ENCODE measurements at regions of chr6 and their contacts with region 1.

Region 1: GRCh38 chr6:56292505-56293181 is 45.3 kb upstream of the COL21A1 start:
- DNase-seq: peak; percentile 83
- H3K4me3 ChIP-seq: no peak overlapping the region
- H3K27ac ChIP-seq: no peak overlapping the region
- H3K4me1 ChIP-seq: peaks cover 24% of the 10 kb centered on the region
- H3K27me3 ChIP-seq: no peaks in the 10 kb centered on the region
- CTCF ChIP-seq: peak; percentile 82

Region 2: DNA sequence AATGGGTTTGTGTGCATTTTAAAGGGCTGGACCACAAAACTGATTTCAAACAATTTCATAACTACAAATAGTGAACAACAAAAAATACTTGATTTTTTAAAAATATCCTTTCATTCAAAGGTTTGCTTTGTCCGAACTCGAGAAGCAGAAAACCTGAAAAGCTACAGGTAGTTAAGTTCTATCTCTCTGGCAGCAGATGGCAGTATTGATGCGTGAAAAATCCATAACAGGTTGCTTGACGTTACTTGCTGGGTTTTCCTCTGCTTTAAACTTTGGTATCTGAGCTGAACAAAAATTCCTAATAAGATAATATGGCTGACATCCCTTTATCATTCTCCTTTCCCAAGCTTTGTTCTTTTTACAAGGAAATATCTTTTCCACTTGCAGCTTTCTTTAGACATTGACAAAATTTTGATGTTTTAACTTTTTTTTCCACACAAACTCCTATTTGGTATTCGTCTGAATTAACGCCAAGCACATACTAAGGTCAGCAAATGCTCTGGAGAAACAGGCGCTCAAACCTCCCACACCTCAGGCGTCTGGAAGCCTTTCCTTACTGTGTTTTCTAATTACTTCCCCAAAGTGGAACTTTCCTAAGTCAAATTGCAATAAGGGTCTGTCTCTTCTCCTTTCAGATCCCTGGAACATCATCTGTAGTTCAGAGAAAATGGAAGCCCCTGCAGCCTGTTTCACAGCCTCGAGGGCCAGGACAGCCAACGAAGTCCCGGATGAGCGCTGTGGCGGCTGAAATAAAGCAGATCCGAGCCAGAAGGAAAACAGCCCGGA is 1015.7 kb before region 1 on chr6:
- CTCF ChIA-PET with region 1: interaction called, 11 read pairs
- POLR2A ChIA-PET with region 1: no interaction called
- intact Hi-C with region 1: loop called (anchors 2 kb)
- DNase-seq: peak; percentile 73
- H3K4me3 ChIP-seq: no peak overlapping the region
- H3K27ac ChIP-seq: no peak overlapping the region
- H3K4me1 ChIP-seq: peaks cover 6% of the 10 kb centered on the region
- H3K27me3 ChIP-seq: no peaks in the 10 kb centered on the region
- CTCF ChIP-seq: peak; percentile 78

Region 3: GRCh38 chr6:55293116-55293515 is 999.5 kb before region 1 on chr6:
- CTCF ChIA-PET with region 1: no interaction called
- POLR2A ChIA-PET with region 1: no interaction called
- intact Hi-C with region 1: loop called (anchors 5 kb)
- DNase-seq: peak; percentile 34
- H3K4me3 ChIP-seq: no peak overlapping the region
- H3K27ac ChIP-seq: no peak overlapping the region
- H3K4me1 ChIP-seq: no peaks in the 10 kb centered on the region
- H3K27me3 ChIP-seq: no peaks in the 10 kb centered on the region
- CTCF ChIP-seq: peak; percentile 61

Region 4: DNA sequence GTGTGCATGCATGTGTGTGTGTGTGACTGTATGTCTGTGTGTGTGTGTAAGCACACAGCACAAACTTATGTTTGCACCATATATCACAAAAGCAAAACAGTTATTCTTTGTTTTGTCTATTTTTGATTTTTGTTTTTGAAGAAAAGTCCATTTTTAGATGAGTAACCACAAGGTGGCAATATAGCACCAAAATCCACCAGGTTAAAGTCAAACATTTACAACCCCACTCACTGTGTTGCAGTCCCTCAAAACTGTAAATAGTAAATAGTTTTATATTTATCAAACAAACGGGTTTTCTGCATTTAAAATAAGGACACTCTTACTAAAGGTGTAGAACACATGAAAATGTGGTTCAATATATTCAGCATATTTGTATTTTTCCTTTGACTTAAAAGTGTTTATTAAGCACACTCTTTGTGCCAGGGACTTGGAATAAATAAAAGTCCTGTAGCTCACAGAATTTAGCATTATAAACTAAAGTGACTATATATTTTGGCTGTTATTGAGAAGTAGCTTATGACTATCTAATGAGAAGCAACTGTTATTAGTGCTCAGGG is 846.9 kb before region 1 on chr6:
- CTCF ChIA-PET with region 1: interaction called, 4 read pairs
- POLR2A ChIA-PET with region 1: no interaction called
- intact Hi-C with region 1: loop called (anchors 2 kb)
- DNase-seq: peak; percentile 56
- H3K4me3 ChIP-seq: no peak overlapping the region
- H3K27ac ChIP-seq: no peak overlapping the region
- H3K4me1 ChIP-seq: no peaks in the 10 kb centered on the region
- H3K27me3 ChIP-seq: no peaks in the 10 kb centered on the region
- CTCF ChIP-seq: peak; percentile 71

Region 5: GRCh38 chr6:55886185-55886836 is 406.3 kb before region 1 on chr6:
- CTCF ChIA-PET with region 1: no interaction called
- POLR2A ChIA-PET with region 1: no interaction called
- intact Hi-C with region 1: loop called (anchors 10 kb)
- DNase-seq: peak; percentile 39
- H3K4me3 ChIP-seq: no peak overlapping the region
- H3K27ac ChIP-seq: no peak overlapping the region
- H3K4me1 ChIP-seq: peaks cover 14% of the 10 kb centered on the region
- H3K27me3 ChIP-seq: no peaks in the 10 kb centered on the region
- CTCF ChIP-seq: peak; percentile 66

Region 6: DNA sequence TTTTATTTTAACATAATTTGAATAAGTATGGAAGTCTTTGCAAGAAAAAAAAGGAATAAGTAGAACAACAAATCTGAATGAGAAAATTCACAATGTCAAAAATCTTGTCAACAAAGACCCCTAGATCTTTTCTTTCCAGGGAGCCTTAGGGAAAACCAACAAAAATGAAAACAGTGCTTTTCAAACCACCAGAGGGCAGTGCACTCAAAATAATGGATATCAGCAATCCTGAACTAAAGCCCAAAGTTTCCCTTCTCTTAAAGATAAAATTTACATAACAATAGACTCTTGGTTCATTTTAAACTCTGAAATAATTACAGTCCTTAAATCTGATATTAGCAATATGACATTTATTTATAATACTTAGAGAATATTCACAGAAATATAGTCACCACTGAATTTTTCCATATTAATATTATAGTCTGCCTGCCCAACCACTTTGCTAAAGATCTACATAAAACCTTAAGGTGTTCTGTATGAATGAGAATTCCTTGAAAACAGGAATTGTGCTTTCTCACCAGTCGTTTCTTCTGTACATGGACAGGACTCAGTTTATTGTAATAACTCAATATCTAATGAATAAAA is 311.9 kb before region 1 on chr6:
- CTCF ChIA-PET with region 1: interaction called, 7 read pairs
- POLR2A ChIA-PET with region 1: no interaction called
- intact Hi-C with region 1: loop called (anchors 1 kb)
- DNase-seq: peak; percentile 82
- H3K4me3 ChIP-seq: no peak overlapping the region
- H3K27ac ChIP-seq: peak overlapping the region; percentile 48
- H3K4me1 ChIP-seq: peaks cover 25% of the 10 kb centered on the region
- H3K27me3 ChIP-seq: no peaks in the 10 kb centered on the region
- CTCF ChIP-seq: peak; percentile 80

Region 7: GRCh38 chr6:56311061-56311460 is 18.4 kb after region 1 on chr6:
- CTCF ChIA-PET with region 1: no interaction called
- POLR2A ChIA-PET with region 1: no interaction called
- intact Hi-C with region 1: no loop called
- DNase-seq: no peak
- H3K4me3 ChIP-seq: no peak overlapping the region
- H3K27ac ChIP-seq: no peak overlapping the region
- H3K4me1 ChIP-seq: no peaks in the 10 kb centered on the region
- H3K27me3 ChIP-seq: no peaks in the 10 kb centered on the region
- CTCF ChIP-seq: no peak

Measured in A673 (cell line).